ENCODE measurements at regions of chr3 and their contacts with region 1.

Region 1: DNA sequence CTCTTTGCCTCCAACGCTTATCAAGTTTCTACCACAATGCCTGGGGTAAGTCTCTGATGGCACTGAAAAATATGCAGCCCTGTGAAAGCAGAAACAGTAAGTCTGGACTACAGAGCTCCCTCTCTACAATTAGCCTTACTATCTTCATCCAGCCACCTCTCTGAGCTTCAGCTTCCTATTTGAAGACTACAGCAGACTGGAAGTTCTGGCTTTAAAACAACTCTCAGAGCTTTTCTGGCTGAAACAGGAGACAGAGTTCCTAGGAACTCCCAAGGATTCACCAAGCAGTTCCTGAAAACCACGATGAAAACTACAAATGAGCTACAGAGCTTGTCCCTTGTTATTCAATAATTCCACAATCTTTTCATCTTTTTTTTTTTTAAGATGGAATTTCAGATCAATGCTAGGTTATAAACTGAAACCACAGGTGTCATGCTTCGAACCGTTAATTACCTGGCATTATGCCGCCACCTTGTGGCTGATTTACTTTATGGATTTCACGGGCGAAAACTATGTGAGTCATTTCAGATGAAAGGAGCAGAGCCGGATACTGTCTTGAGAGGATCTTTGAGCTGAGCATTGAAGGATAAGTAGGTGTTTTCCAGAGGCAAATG is 3.9 kb downstream of the CRYGS start:
- DNase-seq: peak; percentile 81 to 93 (median 87)
- H3K4me3 ChIP-seq: peak overlapping the region in 2 of 7 experiments; percentile 34 to 54
- H3K27ac ChIP-seq: no peak overlapping the region
- H3K4me1 ChIP-seq: peaks cover 2 to 29% (median 14%) of the 10 kb centered on the region in 4 experiments
- H3K27me3 ChIP-seq: no peaks in the 10 kb centered on the region

Region 2: DNA sequence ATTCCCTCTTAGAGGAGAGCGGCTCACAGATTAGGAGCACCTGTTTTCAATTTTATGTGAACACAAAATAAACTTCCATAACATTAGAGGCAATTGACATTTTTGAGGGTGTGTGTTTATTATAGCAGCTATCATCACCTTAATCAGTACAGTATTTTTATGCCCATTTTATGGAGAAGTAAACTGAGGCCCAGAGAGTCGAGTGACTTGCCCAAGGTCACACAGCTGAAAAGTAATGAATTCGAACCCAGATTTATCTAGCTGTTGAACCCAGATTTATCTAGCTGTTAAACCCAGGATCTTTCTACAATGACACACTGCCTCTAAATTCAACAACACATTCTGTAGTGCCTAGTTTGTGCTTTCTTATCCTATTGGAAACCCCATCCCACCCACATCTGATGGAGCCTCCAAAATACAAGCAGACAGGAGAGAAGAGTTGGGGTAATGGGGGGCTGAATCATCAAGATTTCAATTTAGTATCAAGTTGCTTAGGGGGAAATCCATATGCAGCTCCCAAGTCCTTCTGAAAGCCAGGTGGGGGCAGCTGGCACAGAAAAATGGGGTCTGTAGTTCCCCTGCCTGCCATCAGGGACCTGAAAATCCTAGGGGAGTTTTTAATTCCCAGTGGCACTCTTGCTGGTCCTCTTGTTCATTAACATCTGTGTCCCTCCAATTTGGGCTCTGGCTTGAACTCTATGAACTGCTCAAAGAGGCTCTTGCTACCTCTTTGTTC is 552.1 kb before region 1 on chr3:
- CTCF ChIA-PET with region 1: interaction called, 122 read pairs
- POLR2A ChIA-PET with region 1: no interaction called
- DNase-seq: no peak
- H3K4me3 ChIP-seq: no peak overlapping the region
- H3K27ac ChIP-seq: no peak overlapping the region
- H3K4me1 ChIP-seq: peaks cover 0 to 5% (median 2%) of the 10 kb centered on the region in 4 experiments
- H3K27me3 ChIP-seq: peaks cover 0 to 3% (median 0%) of the 10 kb centered on the region in 5 experiments

Region 3: GRCh38 chr3:186259612-186260383 is 280.5 kb before region 1 on chr3:
- CTCF ChIA-PET with region 1: interaction called, 232 read pairs
- POLR2A ChIA-PET with region 1: no interaction called
- DNase-seq: peak; percentile 69 to 76 (median 72)
- H3K4me3 ChIP-seq: peak overlapping the region in 1 of 7 experiments; percentile 19
- H3K27ac ChIP-seq: no peak overlapping the region
- H3K4me1 ChIP-seq: peaks cover 0 to 14% (median 9%) of the 10 kb centered on the region in 4 experiments
- H3K27me3 ChIP-seq: no peaks in the 10 kb centered on the region

Region 4: DNA sequence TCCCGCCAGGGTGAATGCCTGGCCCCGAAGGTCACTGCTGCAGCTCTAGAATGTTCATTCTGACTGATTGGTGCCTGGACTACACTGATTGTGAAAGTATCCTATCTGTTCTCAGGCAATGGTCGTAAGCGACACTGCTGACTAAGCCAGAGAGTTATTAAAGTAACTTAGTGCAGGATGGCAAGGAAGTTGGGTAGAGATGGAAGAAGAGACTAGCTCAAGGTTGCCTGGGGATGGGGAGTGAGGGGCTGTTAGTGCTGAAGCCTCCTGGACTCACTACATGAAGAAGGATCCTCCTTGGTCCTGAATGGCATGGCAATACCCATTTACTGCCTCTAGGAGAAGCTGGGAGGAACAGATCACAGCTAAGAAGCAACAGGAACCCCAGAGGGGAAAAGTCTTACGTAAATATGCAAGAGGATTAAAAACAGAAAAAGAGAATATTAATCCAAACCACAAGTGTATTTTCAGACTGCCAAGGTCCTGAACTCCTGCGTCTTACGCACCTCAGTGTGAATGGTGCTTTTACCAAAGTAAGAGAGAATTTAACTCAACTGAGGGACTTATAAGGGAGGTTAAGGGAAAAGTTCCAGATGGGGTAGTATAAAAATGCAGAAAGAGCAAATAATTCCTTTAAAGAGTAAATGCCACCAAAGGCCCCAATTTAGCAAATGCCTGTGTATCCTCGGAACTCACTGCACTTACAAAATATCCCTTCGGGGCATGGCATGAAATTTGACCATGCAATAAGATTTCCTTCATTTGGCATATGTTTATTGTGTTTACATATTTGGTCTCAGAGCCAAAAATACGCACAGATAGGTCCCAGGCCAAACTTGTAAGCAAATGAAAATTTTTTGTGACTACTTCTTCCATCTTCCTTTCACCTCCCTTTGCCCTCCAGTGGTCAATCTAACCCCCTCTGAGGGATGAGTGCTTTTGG is 114.3 kb before region 1 on chr3:
- CTCF ChIA-PET with region 1: interaction called, 11 read pairs
- POLR2A ChIA-PET with region 1: no interaction called
- DNase-seq: peak; percentile 28 to 62 (median 52)
- H3K4me3 ChIP-seq: no peak overlapping the region
- H3K27ac ChIP-seq: no peak overlapping the region
- H3K4me1 ChIP-seq: peaks cover 3 to 19% (median 14%) of the 10 kb centered on the region in 4 experiments
- H3K27me3 ChIP-seq: no peaks in the 10 kb centered on the region

Region 5: GRCh38 chr3:186509423-186509822 is 30.9 kb before region 1 on chr3:
- CTCF ChIA-PET with region 1: interaction called, 14 read pairs
- POLR2A ChIA-PET with region 1: no interaction called
- DNase-seq: peak in 2 of 3 donors; percentile 46 to 55
- H3K4me3 ChIP-seq: no peak overlapping the region
- H3K27ac ChIP-seq: no peak overlapping the region
- H3K4me1 ChIP-seq: peaks cover 0 to 41% (median 11%) of the 10 kb centered on the region in 4 experiments
- H3K27me3 ChIP-seq: no peaks in the 10 kb centered on the region

Region 6: GRCh38 chr3:186520957-186521842 is 19.1 kb before region 1 on chr3:
- CTCF ChIA-PET with region 1: interaction called, 46 read pairs
- POLR2A ChIA-PET with region 1: interaction called, 5 read pairs
- DNase-seq: no peak
- H3K4me3 ChIP-seq: no peak overlapping the region
- H3K27ac ChIP-seq: peak overlapping the region in 1 of 2 experiments; percentile 5
- H3K4me1 ChIP-seq: peaks cover 14 to 69% (median 44%) of the 10 kb centered on the region in 4 experiments
- H3K27me3 ChIP-seq: no peaks in the 10 kb centered on the region

Region 7: GRCh38 chr3:186630950-186631641 is 90.8 kb after region 1 on chr3:
- CTCF ChIA-PET with region 1: no interaction called
- POLR2A ChIA-PET with region 1: no interaction called
- DNase-seq: no peak
- H3K4me3 ChIP-seq: no peak overlapping the region
- H3K27ac ChIP-seq: no peak overlapping the region
- H3K4me1 ChIP-seq: no peaks in the 10 kb centered on the region
- H3K27me3 ChIP-seq: peaks cover 0 to 3% (median 2%) of the 10 kb centered on the region in 5 experiments

Region 8: GRCh38 chr3:186849374-186849975 is 309.1 kb after region 1 on chr3:
- CTCF ChIA-PET with region 1: no interaction called
- POLR2A ChIA-PET with region 1: no interaction called
- DNase-seq: peak; percentile 63 to 76 (median 72)
- H3K4me3 ChIP-seq: no peak overlapping the region
- H3K27ac ChIP-seq: no peak overlapping the region
- H3K4me1 ChIP-seq: peaks cover 0 to 4% (median 0%) of the 10 kb centered on the region in 4 experiments
- H3K27me3 ChIP-seq: no peaks in the 10 kb centered on the region